ENCODE measurements at regions of chr17 and their contacts with region 1.

Region 1: GRCh38 chr17:81484195-81484979 is 28.2 kb downstream of the ACTG1 start:
- DNase-seq: peak; percentile 85
- ATAC-seq: peak; percentile 77
- H3K4me3 ChIP-seq: peak overlapping the region; percentile 45 to 56
- H3K27ac ChIP-seq: peak overlapping the region; percentile 74
- H3K4me1 ChIP-seq: peaks cover 21 to 52% of the 10 kb centered on the region in 2 experiments
- H3K27me3 ChIP-seq: no peaks in the 10 kb centered on the region
- CTCF ChIP-seq: peak; percentile 93 to 97 (median 96)
- POLR2A ChIP-seq: no peak
- RAD21 ChIP-seq: peak; percentile 99

Region 2: DNA sequence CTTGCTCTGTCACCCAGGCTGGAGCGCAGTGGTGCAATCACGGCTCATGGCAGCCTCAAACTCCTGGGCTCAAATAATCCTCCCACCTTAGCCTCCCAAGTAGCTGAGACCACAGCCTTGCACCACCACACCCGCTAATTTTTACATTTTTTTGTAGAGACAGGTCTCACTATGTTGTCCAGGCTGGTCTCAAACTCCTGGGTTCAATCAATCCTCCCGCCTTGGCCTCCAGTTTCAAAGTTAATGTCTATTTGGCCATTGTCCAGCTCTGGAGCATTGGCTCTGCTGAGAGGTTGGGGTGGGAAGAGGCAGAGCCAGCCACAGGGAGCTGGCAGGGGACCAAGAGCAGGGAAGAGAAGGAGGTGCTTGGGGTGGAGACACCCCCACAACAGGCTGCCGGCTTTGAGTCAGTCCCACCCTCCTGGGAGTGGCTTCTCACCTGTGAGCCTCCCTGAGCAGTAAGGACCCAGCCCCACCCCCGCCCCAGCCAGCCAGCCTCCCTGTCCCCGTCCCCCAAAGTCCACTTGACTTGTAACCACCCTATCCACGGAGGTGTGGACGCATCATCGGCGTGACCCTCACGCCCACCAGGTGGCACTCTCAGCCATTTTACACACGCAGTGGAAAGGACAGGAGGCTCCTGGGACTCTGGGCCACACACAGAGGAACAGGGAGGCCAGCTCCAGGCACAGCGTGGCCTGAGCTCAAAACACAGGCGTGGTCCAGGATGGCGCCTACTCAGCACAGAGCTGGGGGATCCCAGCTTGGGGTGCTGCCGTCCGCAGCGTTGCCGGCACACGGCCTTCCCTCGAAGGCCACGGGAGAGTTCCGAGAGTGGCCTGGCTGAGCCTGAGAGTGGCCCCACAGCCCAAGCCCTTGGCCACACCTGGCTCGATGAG is 341.8 kb before region 1 on chr17:
- CTCF ChIA-PET with region 1: interaction called, 4 read pairs
- POLR2A ChIA-PET with region 1: no interaction called
- RAD21 ChIA-PET with region 1: interaction called in 1 of 2 experiments, 3 read pairs
- intact Hi-C with region 1: loop called (anchors 5 kb)
- DNase-seq: peak; percentile 76
- ATAC-seq: peak; percentile 93
- H3K4me3 ChIP-seq: no peak overlapping the region
- H3K27ac ChIP-seq: peak overlapping the region; percentile 25; the same call in 1 of the 2 replicates
- H3K4me1 ChIP-seq: peaks cover 6 to 12% of the 10 kb centered on the region in 2 experiments; a peak in 3 of 4 replicates
- H3K27me3 ChIP-seq: no peaks in the 10 kb centered on the region
- CTCF ChIP-seq: peak; percentile 78 to 85 (median 84); a peak in 5 of 6 replicates
- POLR2A ChIP-seq: no peak
- RAD21 ChIP-seq: peak; percentile 87

Region 3: GRCh38 chr17:81253358-81254131 is 230.8 kb before region 1 on chr17:
- CTCF ChIA-PET with region 1: interaction called, 5 read pairs
- POLR2A ChIA-PET with region 1: no interaction called
- RAD21 ChIA-PET with region 1: no interaction called
- intact Hi-C with region 1: loop called (anchors 1 kb)
- DNase-seq: no peak
- ATAC-seq: peak; percentile 66
- H3K4me3 ChIP-seq: no peak overlapping the region
- H3K27ac ChIP-seq: no peak overlapping the region
- H3K4me1 ChIP-seq: no peaks in the 10 kb centered on the region
- H3K27me3 ChIP-seq: no peaks in the 10 kb centered on the region
- CTCF ChIP-seq: peak; percentile 69 to 95 (median 74)
- POLR2A ChIP-seq: no peak
- RAD21 ChIP-seq: peak; percentile 93

Region 4: GRCh38 chr17:81294856-81295680 is 189.3 kb before region 1 on chr17 and contains the start of gene SLC38A10:
- CTCF ChIA-PET with region 1: interaction called, 20 read pairs
- POLR2A ChIA-PET with region 1: interaction called, 4 read pairs
- RAD21 ChIA-PET with region 1: interaction called, 5 to 8 read pairs
- intact Hi-C with region 1: loop called (anchors 5 kb)
- DNase-seq: peak; percentile 73
- ATAC-seq: peak; percentile 81
- H3K4me3 ChIP-seq: peak within 1 kb of the TSS; percentile 78 to 82
- H3K27ac ChIP-seq: peak within 1 kb of the TSS; percentile 98
- H3K4me1 ChIP-seq: peaks cover 17 to 37% of the 10 kb centered on the region in 2 experiments; a peak in 3 of 4 replicates
- H3K27me3 ChIP-seq: no peaks in the 10 kb centered on the region
- CTCF ChIP-seq: no peak; a peak in 1 of 6 replicates
- POLR2A ChIP-seq: peak; percentile 87
- RAD21 ChIP-seq: no peak
- total RNA-seq, gene SLC38A10: 109 TPM

Region 5: GRCh38 chr17:81309070-81309905 is 175.1 kb before region 1 on chr17:
- CTCF ChIA-PET with region 1: interaction called, 11 read pairs
- POLR2A ChIA-PET with region 1: no interaction called
- RAD21 ChIA-PET with region 1: interaction called, 5 to 7 read pairs
- intact Hi-C with region 1: no loop called
- DNase-seq: peak; percentile 85
- ATAC-seq: peak; percentile 95
- H3K4me3 ChIP-seq: peak overlapping the region; percentile 69 to 78
- H3K27ac ChIP-seq: peak overlapping the region; percentile 88
- H3K4me1 ChIP-seq: peaks cover 33 to 37% of the 10 kb centered on the region in 2 experiments
- H3K27me3 ChIP-seq: no peaks in the 10 kb centered on the region
- CTCF ChIP-seq: peak in 2 of 3 experiments; percentile 69 to 77; a peak in 4 of 6 replicates
- POLR2A ChIP-seq: peak; percentile 77
- RAD21 ChIP-seq: peak; percentile 58

Region 6: DNA sequence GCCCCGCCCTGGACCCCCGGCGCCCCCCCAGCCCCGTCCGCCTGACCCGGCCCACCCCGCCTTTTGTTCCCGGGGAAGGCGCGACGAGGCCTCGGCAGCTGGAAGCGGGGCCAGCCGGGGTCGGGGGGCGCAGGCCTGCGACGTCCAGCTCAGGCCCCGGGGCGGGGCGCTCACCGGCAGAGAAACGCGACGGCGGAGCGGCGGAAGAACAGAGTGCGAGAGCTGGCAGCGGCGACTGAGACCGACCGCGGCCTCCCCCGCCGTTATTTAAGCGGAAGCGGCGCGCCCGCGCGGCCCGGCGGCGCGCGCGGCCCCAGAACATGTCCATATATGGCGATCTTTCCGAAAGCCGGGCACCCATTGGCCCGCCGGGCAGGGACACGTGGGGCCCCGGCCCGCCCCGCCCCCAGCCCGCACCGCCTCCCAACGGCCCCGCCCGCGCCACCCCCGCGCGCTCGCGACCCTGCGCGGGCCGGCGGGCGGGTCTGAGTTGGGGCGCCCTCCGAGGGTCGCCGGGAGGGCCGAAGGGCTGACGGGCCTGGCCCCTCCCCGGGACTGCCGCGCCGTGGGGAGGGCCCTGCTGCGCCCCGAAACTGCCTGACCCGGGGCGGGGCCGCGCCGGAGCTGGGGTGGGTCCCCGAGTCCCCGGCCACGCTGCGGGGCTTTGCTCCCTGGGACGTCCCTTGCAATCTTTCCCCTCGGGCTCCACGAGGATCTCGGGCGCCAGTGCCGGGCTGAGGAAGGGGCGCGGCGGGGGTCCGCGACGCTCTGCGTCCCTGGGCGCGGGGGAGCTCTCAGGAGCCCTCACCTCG is 28.4 kb after region 1 on chr17 and contains the start of gene ACTG1:
- CTCF ChIA-PET with region 1: interaction called, 9 read pairs
- POLR2A ChIA-PET with region 1: interaction called, 11 read pairs
- RAD21 ChIA-PET with region 1: no interaction called
- intact Hi-C with region 1: no loop called
- DNase-seq: peak; percentile 80
- ATAC-seq: peak; percentile 46
- H3K4me3 ChIP-seq: peak within 1 kb of the TSS; percentile 90 to 96
- H3K27ac ChIP-seq: peak within 1 kb of the TSS; percentile 100
- H3K4me1 ChIP-seq: peaks cover 23 to 77% of the 10 kb centered on the region in 2 experiments
- H3K27me3 ChIP-seq: no peaks in the 10 kb centered on the region
- CTCF ChIP-seq: no peak
- POLR2A ChIP-seq: peak; percentile 99
- RAD21 ChIP-seq: no peak
- total RNA-seq, gene ACTG1: 6,223 TPM

Region 7: GRCh38 chr17:81537343-81537855 is 53.0 kb after region 1 on chr17:
- CTCF ChIA-PET with region 1: interaction called, 5 read pairs
- POLR2A ChIA-PET with region 1: no interaction called
- RAD21 ChIA-PET with region 1: interaction called, 3 to 5 read pairs
- intact Hi-C with region 1: loop called (anchors 1 kb)
- DNase-seq: peak; percentile 49
- ATAC-seq: peak; percentile 78
- H3K4me3 ChIP-seq: no peak overlapping the region
- H3K27ac ChIP-seq: no peak overlapping the region
- H3K4me1 ChIP-seq: peaks cover 3 to 7% of the 10 kb centered on the region in 2 experiments; a peak in 2 of 4 replicates
- H3K27me3 ChIP-seq: no peaks in the 10 kb centered on the region
- CTCF ChIP-seq: peak; percentile 83 to 97 (median 90); a peak in 5 of 6 replicates
- POLR2A ChIP-seq: no peak
- RAD21 ChIP-seq: peak; percentile 97